Caco-2 (cell line): ENCODE measurements at regions of chr10 and their contacts with region 1.

Region 1: GRCh38 chr10:28393966-28394568 is 91.2 kb upstream of the MPP7 start:
- DNase-seq: peak; percentile 79 to 82
- H3K4me3 ChIP-seq: no peak overlapping the region
- H3K4me3 Mint-ChIP-seq: no peak overlapping the region
- H3K27ac Mint-ChIP-seq: no peak overlapping the region
- H3K4me1 ChIP-seq: no peaks in the 10 kb centered on the region
- H3K4me1 Mint-ChIP-seq: peaks cover 8% of the 10 kb centered on the region
- H3K27me3 ChIP-seq: no peaks in the 10 kb centered on the region
- H3K27me3 Mint-ChIP-seq: no peaks in the 10 kb centered on the region
- CTCF ChIP-seq: peak; percentile 99

Region 2: GRCh38 chr10:27783660-27784059 is 610.4 kb before region 1 on chr10:
- CTCF ChIA-PET with region 1: interaction called, 5 read pairs
- POLR2A ChIA-PET with region 1: no interaction called
- intact Hi-C with region 1: loop called (anchors 2 kb)
- DNase-seq: peak; percentile 51 to 52
- H3K4me3 ChIP-seq: no peak overlapping the region
- H3K4me3 Mint-ChIP-seq: no peak overlapping the region
- H3K27ac Mint-ChIP-seq: no peak overlapping the region
- H3K4me1 ChIP-seq: no peaks in the 10 kb centered on the region
- H3K4me1 Mint-ChIP-seq: no peaks in the 10 kb centered on the region
- H3K27me3 ChIP-seq: no peaks in the 10 kb centered on the region
- H3K27me3 Mint-ChIP-seq: peaks cover 39% of the 10 kb centered on the region
- CTCF ChIP-seq: peak; percentile 35 to 72

Region 3: DNA sequence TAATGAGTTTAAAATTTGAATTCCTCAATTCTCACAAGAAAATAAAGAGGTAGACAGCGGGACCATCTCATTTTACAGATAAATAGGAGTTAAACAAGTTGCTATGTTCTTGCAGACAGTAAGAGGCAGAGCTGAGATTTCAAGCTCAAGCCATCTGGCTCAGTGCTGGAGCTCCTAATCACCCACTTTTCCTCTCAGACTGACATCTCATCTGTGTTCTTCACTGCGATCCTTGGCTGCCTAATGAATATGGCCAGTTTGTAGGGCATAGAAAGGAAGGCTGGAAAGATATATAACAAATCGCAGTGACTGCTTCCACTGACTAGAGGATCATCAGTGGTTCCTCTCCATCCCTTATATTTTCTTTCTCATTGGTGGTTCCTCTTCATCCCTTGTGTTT is 242.4 kb before region 1 on chr10:
- CTCF ChIA-PET with region 1: no interaction called
- POLR2A ChIA-PET with region 1: no interaction called
- intact Hi-C with region 1: no loop called
- DNase-seq: no peak
- H3K4me3 ChIP-seq: no peak overlapping the region
- H3K4me3 Mint-ChIP-seq: no peak overlapping the region
- H3K27ac Mint-ChIP-seq: no peak overlapping the region
- H3K4me1 ChIP-seq: no peaks in the 10 kb centered on the region
- H3K4me1 Mint-ChIP-seq: peaks cover 11% of the 10 kb centered on the region
- H3K27me3 ChIP-seq: no peaks in the 10 kb centered on the region
- H3K27me3 Mint-ChIP-seq: no peaks in the 10 kb centered on the region
- CTCF ChIP-seq: no peak

Region 4: DNA sequence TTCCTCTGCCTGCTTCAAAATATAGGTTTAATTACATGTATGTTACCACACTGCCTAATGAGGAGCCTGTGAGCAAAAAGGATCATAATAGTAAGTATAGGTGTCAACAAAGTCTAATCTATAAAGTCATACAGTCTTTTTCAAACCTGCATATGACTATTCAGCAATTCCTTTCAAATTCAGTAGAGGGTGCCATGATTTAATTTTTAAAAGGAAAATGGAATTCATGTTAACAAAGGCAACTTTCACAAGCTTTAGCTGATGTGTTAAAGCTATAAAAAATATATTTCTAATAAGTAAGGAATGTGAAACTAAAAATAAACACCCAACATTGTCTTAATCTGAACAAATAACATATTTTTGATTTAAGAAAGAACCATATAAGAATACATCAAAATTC is 143.3 kb before region 1 on chr10:
- CTCF ChIA-PET with region 1: interaction called, 31 read pairs
- POLR2A ChIA-PET with region 1: no interaction called
- intact Hi-C with region 1: loop called (anchors 1 kb)
- DNase-seq: peak in 1 of 2 experiments; percentile 28
- H3K4me3 ChIP-seq: no peak overlapping the region
- H3K4me3 Mint-ChIP-seq: no peak overlapping the region
- H3K27ac Mint-ChIP-seq: no peak overlapping the region
- H3K4me1 ChIP-seq: 0 out of 2 replicates have a peak, but pooled peaks cover 4% of the 10 kb centered on the region
- H3K4me1 Mint-ChIP-seq: peaks cover 12% of the 10 kb centered on the region
- H3K27me3 ChIP-seq: no peaks in the 10 kb centered on the region
- H3K27me3 Mint-ChIP-seq: no peaks in the 10 kb centered on the region
- CTCF ChIP-seq: peak; percentile 51 to 71

Region 5: DNA sequence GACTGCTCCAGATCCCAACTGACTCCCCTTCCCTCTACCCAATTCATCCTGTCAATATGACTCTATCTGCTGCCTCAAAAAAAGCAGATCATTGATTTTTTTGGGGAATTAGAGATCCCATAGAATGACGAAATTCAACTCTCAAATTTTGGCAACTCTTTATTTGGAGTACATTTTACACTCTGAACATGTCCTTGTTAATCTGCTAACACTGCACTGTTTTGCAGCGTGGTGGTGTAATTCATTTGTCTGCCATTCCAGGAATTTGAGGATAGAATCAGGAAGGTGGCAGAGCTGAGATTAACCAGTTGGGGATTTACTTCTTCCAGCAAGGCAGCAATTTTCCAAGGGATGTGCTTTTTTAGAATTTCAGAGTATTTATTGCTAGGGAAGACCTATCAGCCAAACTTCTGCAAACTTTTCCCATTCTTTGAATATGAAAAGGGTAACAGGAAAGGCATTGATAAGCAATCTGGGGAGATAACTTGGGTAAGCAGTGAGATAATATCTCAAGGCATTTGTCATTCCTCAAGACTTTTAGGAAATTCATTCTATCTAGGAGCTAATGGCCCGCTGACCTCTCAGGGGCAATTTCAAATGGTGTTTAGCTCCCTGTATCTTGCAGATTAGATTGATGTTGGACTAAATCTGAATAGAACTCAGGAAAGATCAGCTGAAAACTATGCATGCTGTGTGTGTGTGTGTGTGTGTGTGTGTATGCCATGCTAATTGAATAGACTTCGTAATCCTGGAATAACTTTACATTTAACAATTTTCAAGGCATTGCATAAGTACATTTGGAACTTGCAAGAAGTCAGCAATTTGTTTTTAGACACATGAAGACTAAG is 293.0 kb after region 1 on chr10:
- CTCF ChIA-PET with region 1: no interaction called
- POLR2A ChIA-PET with region 1: no interaction called
- intact Hi-C with region 1: no loop called
- DNase-seq: peak; percentile 60 to 80
- H3K4me3 ChIP-seq: no peak overlapping the region
- H3K4me3 Mint-ChIP-seq: peak overlapping the region; percentile 15
- H3K27ac Mint-ChIP-seq: peak overlapping the region; percentile 6
- H3K4me1 ChIP-seq: peaks cover 43% of the 10 kb centered on the region
- H3K4me1 Mint-ChIP-seq: peaks cover 49% of the 10 kb centered on the region
- H3K27me3 ChIP-seq: no peaks in the 10 kb centered on the region
- H3K27me3 Mint-ChIP-seq: no peaks in the 10 kb centered on the region
- CTCF ChIP-seq: no peak

Region 6: GRCh38 chr10:28722065-28722803 is 328.2 kb after region 1 on chr10:
- CTCF ChIA-PET with region 1: no interaction called
- POLR2A ChIA-PET with region 1: no interaction called
- intact Hi-C with region 1: no loop called
- DNase-seq: peak; percentile 66 to 72
- H3K4me3 ChIP-seq: peak overlapping the region; percentile 68
- H3K4me3 Mint-ChIP-seq: peak overlapping the region; percentile 91
- H3K27ac Mint-ChIP-seq: peak overlapping the region; percentile 75
- H3K4me1 ChIP-seq: peaks cover 23% of the 10 kb centered on the region
- H3K4me1 Mint-ChIP-seq: peaks cover 8% of the 10 kb centered on the region
- H3K27me3 ChIP-seq: no peaks in the 10 kb centered on the region
- H3K27me3 Mint-ChIP-seq: no peaks in the 10 kb centered on the region
- CTCF ChIP-seq: peak in 1 of 2 experiments; percentile 32